Activated CD4-positive, alpha-beta T cell treated with anti-CD3 and anti-CD28 coated beads, Interleukin-2, amount 10 ng/mL, durations not matched to agents 7 days and 5 days (primary cell): ENCODE measurements at regions of chr19 and their contacts with region 1.

Region 1: DNA sequence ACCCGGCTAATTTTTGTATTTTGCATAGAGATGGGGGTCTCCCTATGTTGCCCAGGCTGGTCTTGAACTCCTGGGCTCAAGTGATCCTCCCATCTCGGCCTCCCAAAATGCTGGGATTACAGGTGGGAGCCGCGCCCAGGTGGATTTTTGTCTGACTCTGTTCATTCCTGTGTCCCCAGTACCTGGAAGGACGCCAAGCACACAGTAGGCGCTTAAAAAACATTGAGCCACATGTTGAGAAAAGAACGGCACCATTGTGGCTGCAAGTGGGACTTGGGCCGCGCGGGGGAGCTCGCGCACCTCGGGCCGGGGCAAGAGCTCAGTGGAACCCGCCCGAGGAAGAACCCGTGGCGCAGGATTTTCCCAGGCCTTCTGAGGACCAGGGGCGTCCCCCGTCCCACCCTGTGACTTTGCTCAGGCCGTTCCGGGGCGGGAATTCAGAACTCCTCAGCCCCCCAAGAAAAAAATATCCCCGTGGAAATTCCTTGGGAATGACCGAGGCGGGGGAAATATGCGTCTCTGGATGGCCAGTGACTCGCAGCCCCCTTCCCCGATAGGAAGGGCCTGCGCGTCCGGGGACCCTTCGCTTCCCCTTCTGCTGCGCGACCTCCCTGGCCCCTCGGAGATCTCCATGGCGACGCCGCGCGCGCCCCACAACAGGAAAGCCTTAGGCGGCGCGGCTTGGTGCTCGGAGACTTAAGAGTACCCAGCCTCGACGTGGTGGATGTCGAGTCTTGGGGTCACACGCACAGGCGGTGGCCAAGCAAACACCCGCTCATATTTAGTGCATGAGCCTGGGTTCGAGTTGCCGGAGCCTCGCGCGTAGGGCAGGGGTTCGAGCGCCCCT is 1.4 kb upstream of the ICAM1 start:
- DNase-seq: peak; percentile 88
- H3K4me3 Mint-ChIP-seq: peak overlapping the region; percentile 75
- H3K27ac Mint-ChIP-seq: peak overlapping the region; percentile 90
- H3K4me1 Mint-ChIP-seq: peaks cover 32% of the 10 kb centered on the region
- H3K27me3 Mint-ChIP-seq: no peaks in the 10 kb centered on the region

Region 2: GRCh38 chr19:10251792-10252694 is 17.5 kb before region 1 on chr19 and contains the start of gene MRPL4:
- CTCF ChIA-PET with region 1: interaction called, 16 read pairs
- POLR2A ChIA-PET with region 1: interaction called, 8 read pairs
- DNase-seq: peak; percentile 99
- H3K4me3 Mint-ChIP-seq: peak within 1 kb of the TSS; percentile 96
- H3K27ac Mint-ChIP-seq: peak within 1 kb of the TSS; percentile 99
- H3K4me1 Mint-ChIP-seq: peaks cover 31% of the 10 kb centered on the region
- H3K27me3 Mint-ChIP-seq: no peaks in the 10 kb centered on the region
- total RNA-seq, gene MRPL4: 58.7 to 67.9 TPM

Region 3: GRCh38 chr19:10279737-10280442 is 10.3 kb after region 1 on chr19:
- CTCF ChIA-PET with region 1: interaction called, 66 read pairs
- POLR2A ChIA-PET with region 1: interaction called, 3 read pairs
- DNase-seq: no peak
- H3K4me3 Mint-ChIP-seq: no peak overlapping the region
- H3K27ac Mint-ChIP-seq: no peak overlapping the region
- H3K4me1 Mint-ChIP-seq: peaks cover 13% of the 10 kb centered on the region
- H3K27me3 Mint-ChIP-seq: no peaks in the 10 kb centered on the region

Region 4: DNA sequence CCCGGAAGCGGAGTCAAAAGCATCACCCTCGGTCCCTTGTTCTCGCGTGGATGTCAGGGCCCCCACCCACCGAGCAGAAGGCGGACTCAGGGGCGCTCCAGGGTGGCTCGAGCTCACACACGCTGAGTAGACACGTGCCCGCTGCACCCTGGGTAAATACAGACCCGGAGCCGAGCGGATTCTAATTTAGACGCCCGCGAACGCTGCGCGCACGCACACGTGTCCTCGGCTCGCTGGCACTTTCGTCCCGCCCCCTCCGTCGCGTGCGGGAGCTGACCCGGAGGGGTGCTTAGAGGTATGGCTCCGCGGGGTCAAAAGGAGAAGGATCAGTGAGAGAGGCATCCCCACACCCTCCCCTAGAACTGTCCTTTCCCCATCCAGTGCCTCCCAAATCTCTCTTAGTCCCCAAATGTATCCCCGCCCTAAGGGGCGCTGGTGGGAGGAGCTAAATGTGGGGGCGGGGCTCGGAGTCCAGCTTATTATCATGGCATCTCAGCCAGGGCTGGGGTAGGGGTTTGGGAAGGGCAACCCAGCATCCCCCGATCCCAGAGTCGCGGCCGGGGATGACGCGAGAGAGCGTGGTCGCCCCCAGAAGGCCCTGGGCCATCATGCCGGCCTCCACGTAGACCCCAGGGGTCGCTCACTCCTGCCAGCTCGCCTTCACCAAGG is 19.7 kb after region 1 on chr19:
- CTCF ChIA-PET with region 1: interaction called, 66 read pairs
- POLR2A ChIA-PET with region 1: interaction called, 5 read pairs
- DNase-seq: peak; percentile 57
- H3K4me3 Mint-ChIP-seq: peak overlapping the region; percentile 52
- H3K27ac Mint-ChIP-seq: peak overlapping the region; percentile 9
- H3K4me1 Mint-ChIP-seq: peaks cover 78% of the 10 kb centered on the region
- H3K27me3 Mint-ChIP-seq: peaks cover 65% of the 10 kb centered on the region

Region 5: DNA sequence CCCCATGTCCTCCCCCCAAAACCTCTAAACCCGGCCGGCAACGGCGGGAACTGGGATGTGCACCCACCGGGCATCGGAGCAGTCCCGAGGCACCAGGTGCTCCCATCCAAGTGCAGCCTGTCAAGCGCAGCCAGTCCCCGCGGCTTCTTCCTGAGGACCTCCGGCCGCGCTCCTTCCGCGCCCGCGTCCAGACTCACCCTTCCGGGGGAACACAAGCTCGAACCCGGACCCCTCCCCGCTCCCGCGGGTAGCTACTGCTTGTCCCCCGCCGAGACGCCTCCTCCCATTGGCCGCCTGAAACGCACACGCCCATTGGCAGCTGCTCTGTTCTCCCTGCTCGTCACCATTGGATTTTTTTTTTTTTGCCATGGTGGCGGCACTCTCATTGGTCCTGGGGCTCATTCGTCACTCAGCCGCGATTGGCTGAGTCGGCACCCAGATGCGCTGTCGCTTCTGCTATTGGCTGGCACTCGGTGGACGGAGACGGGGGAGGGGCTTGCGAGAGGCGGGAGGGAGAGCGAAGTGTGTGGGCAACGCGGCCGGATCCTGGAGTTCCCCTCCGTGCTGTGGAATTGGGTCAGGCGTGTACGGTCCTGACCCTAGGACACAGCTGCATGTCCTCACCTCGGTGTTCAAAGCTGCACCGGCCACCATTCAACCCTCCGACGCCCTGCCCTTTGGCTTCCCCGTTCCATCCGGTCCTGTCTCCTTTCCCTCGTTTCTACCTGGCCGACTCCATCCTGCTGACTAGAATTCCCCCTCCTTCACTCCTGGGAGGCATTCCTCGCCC is 111.0 kb after region 1 on chr19 and contains the start of gene TYK2:
- CTCF ChIA-PET with region 1: interaction called, 93 read pairs
- POLR2A ChIA-PET with region 1: interaction called, 4 read pairs
- DNase-seq: peak; percentile 97
- H3K4me3 Mint-ChIP-seq: peak within 1 kb of the TSS; percentile 85
- H3K27ac Mint-ChIP-seq: peak within 1 kb of the TSS; percentile 94
- H3K4me1 Mint-ChIP-seq: peaks cover 21% of the 10 kb centered on the region
- H3K27me3 Mint-ChIP-seq: no peaks in the 10 kb centered on the region
- total RNA-seq, gene TYK2: 251 to 263 TPM

Region 6: GRCh38 chr19:10388957-10389356 is 119.4 kb after region 1 on chr19:
- CTCF ChIA-PET with region 1: interaction called, 93 read pairs
- POLR2A ChIA-PET with region 1: interaction called, 4 read pairs
- DNase-seq: peak; percentile 80
- H3K4me3 Mint-ChIP-seq: no peak overlapping the region
- H3K27ac Mint-ChIP-seq: no peak overlapping the region
- H3K4me1 Mint-ChIP-seq: peaks cover 3% of the 10 kb centered on the region
- H3K27me3 Mint-ChIP-seq: no peaks in the 10 kb centered on the region

Region 7: DNA sequence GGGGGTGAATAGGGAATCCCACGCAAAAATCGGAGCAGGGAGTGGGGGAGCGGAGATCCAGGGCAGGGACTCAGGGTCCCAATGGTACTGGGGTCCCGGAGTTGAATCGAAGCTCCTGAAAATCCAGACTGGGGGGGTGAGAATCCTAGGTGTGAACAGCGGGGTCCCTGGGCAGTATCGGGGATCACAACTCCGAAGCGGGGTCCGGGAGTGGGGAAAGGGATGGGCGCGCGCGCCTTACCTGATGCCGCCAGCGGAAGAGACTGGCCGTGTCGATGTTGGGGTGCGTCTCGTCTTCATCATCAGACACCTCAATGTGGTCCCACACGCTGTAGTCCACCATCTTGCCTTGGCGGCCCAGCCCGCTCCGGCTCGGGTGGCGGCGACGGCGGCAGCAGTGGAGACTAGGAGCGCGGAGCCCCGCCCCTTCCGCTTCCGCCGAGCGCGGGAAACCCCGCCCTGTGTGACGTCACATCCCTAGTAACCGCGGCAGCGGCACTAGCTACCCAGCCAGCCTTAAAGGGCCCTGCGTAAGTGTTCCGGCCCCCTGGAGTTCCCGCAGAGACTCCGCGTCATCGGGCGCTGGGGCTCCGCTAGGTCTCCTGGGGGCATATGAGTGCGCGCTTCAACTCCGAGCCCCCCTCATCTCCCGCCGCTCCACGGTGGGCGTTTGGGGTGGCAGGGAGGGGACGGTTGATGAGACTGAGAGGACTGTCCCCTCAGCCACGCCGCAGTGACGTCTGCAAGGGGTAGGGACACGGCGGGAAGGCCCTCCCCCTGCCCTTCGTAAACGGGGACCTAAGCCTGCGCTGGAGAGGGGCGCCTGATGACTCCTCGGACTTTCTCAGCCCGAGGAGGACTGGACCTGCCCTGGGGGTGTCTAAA is 133.8 kb after region 1 on chr19 and contains the start of gene CDC37:
- CTCF ChIA-PET with region 1: interaction called, 18 read pairs
- POLR2A ChIA-PET with region 1: no interaction called
- DNase-seq: peak; percentile 97
- H3K4me3 Mint-ChIP-seq: peak within 1 kb of the TSS; percentile 97
- H3K27ac Mint-ChIP-seq: peak within 1 kb of the TSS; percentile 92
- H3K4me1 Mint-ChIP-seq: peaks cover 69% of the 10 kb centered on the region
- H3K27me3 Mint-ChIP-seq: no peaks in the 10 kb centered on the region
- total RNA-seq, gene CDC37: 200 to 205 TPM

Region 8: DNA sequence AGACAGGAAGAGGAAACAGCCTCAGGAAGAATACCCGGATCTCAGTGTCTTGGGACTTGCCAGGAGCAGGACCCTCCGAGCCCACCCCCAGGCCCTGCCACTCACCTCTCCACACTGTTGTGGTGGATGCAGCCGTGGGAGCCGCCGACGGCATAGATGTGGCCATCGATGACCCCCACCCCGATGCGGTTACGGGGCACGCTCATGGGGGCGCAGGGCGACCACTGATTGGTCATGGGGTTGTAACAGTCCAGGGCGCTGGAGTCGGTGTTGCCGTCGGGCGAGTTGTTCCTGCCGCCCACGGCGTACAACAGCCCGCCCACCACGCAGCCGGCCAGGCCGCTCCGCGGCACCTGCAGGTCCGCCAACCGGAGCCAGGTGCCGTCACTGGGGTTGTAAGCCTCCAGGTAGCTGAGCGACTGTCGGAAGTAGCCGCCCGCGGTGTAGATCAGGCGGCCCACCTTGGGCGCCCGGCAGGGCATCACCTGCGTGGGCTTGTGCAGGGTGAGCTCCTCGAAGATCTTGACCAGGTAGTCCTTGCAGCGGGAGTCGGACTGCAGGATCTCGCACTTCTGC is 222.0 kb after region 1 on chr19:
- CTCF ChIA-PET with region 1: no interaction called
- POLR2A ChIA-PET with region 1: no interaction called
- DNase-seq: no peak
- H3K4me3 Mint-ChIP-seq: no peak overlapping the region
- H3K27ac Mint-ChIP-seq: no peak overlapping the region
- H3K4me1 Mint-ChIP-seq: peaks cover 14% of the 10 kb centered on the region
- H3K27me3 Mint-ChIP-seq: no peaks in the 10 kb centered on the region